ENCODE measurements at regions of chr4 and their contacts with region 1.

Region 1: DNA sequence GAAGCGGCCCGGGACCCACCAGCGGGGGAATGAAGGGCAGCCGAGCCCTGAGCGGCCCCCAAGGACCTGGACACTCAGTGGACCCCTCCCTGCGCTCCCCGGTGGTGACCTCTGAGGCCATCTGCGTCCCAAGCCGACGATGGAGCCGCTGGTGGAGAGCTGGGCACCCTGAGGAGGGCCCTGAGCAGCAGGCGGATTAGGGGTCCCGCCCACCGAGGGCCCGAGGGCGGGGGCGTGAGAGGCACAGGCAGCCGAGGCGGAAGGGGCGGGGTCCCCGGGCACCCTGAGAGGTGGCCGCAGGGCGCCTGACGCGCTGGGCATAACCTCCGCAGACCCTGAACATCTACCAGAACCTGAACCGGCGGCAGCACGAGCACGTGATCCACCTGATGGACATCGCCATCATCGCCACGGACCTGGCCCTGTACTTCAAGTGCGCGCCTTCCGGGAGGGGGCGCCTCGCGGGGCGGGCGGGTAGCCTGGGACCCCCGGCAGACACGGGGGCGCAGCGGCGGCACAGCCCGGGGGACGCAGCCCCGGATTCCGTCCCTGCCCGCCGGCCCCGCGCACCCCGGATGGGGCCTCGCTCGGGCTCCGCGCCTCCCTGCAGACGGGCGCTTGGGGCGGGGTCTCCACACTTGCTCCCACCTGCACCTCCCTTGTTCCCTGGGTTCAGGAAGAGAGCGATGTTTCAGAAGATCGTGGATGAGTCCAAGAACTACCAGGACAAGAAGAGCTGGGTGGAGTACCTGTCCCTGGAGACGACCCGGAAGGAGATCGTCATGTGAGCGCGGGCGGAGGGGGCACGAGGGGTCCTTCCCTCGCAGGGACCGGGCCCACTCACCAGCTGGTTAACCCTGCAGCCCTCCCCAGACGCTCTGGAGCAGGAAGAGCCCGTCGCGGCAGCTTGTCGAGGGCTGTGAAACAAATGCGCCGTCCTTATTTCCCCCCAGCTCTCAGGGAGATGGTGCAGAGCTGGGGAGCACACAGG is 10.3 kb downstream of the ATP5ME start:
- DNase-seq: peak; percentile 69
- ATAC-seq: peak; percentile 90
- H3K4me3 Mint-ChIP-seq: peak overlapping the region; percentile 85
- H3K27ac Mint-ChIP-seq: peak overlapping the region; percentile 80
- H3K4me1 Mint-ChIP-seq: peaks cover 14% of the 10 kb centered on the region
- H3K27me3 Mint-ChIP-seq: no peaks in the 10 kb centered on the region
- CTCF ChIP-seq: no peak

Region 2: GRCh38 chr4:314296-314903 is 349.3 kb before region 1 on chr4:
- CTCF ChIA-PET with region 1: no interaction called
- POLR2A ChIA-PET with region 1: interaction called, 11 read pairs
- intact Hi-C with region 1: no loop called
- DNase-seq: no peak
- ATAC-seq: no peak
- H3K4me3 Mint-ChIP-seq: no peak overlapping the region
- H3K27ac Mint-ChIP-seq: no peak overlapping the region
- H3K4me1 Mint-ChIP-seq: peaks cover 11% of the 10 kb centered on the region
- H3K27me3 Mint-ChIP-seq: no peaks in the 10 kb centered on the region
- CTCF ChIP-seq: no peak

Region 3: GRCh38 chr4:498328-498904 is 165.3 kb before region 1 on chr4:
- CTCF ChIA-PET with region 1: no interaction called
- POLR2A ChIA-PET with region 1: no interaction called
- intact Hi-C with region 1: loop called (anchors 5 kb)
- DNase-seq: no peak
- ATAC-seq: peak; percentile 25
- H3K4me3 Mint-ChIP-seq: peak overlapping the region; percentile 93
- H3K27ac Mint-ChIP-seq: peak overlapping the region; percentile 95
- H3K4me1 Mint-ChIP-seq: peaks cover 32% of the 10 kb centered on the region
- H3K27me3 Mint-ChIP-seq: no peaks in the 10 kb centered on the region
- CTCF ChIP-seq: no peak

Region 4: DNA sequence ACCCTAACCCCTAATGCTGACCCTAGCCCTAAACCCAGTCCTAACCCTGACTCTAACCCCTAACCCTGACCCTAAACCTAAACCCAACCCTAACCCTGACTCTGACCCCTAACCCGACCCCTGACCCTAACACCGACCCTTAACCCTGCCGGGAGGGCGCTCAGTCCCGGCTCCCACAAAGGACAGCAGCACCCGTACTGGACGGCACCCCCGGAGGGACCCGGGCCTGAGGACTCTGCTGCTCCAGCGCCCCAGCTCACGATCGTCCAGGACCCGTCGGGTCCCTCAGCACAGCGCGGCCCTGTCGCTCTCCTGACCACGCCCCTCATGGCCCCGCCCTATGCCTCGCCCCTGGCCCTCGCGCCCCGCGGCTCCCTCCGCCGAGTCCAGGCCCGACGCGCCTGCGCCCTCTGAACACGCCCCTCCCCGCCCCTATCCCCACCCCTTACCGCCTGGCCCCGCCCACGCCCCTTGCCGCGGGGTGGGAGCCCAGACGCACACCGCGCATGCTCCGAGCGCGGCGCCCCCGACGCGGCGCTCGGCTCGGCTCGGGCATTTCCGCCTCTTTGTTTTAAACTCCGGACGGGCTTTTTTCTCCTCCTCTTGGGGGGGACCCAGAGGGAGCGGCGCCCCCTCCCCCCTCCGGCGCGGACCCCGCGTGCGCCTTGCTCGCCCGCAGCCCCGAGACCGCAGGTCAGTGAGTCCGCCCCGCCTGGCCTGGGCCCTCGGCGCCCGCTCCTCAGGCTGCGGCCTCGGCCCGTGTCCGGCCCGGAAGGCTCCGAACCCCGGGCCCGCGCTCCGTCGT is 41.7 kb after region 1 on chr4 and contains the start of gene PCGF3:
- CTCF ChIA-PET with region 1: no interaction called
- POLR2A ChIA-PET with region 1: no interaction called
- intact Hi-C with region 1: loop called (anchors 1 kb)
- DNase-seq: peak; percentile 95
- ATAC-seq: peak; percentile 97
- H3K4me3 Mint-ChIP-seq: peak within 1 kb of the TSS; percentile 87
- H3K27ac Mint-ChIP-seq: peak within 1 kb of the TSS; percentile 76
- H3K4me1 Mint-ChIP-seq: peaks cover 35% of the 10 kb centered on the region
- H3K27me3 Mint-ChIP-seq: no peaks in the 10 kb centered on the region
- CTCF ChIP-seq: no peak
- total RNA-seq, gene PCGF3: 51.3 and 59.2 TPM in 2 replicates

Measured in activated B cell treated with CpG ODN at 0.5 μM for 24 hours (primary cell).